K562 (cell line): ENCODE measurements at regions of chr13 and their contacts with region 1.

Region 1: GRCh38 chr13:41905600-41906254 is 55.2 kb downstream of the VWA8 start:
- DNase-seq: peak in 3 of 4 experiments; percentile 19 to 32 (median 31)
- ATAC-seq: peak; percentile 90
- H3K4me3 ChIP-seq: no peak overlapping the region
- H3K27ac ChIP-seq: no peak overlapping the region
- H3K4me1 ChIP-seq: no peaks in the 10 kb centered on the region
- H3K27me3 ChIP-seq: no peaks in the 10 kb centered on the region
- CTCF ChIP-seq: peak; percentile 40 to 58 (median 42); a peak in 4 of 6 replicates
- EP300 ChIP-seq: no peak
- POLR2A ChIP-seq: no peak
- RAD21 ChIP-seq: peak; percentile 45 to 74

Region 2: GRCh38 chr13:42215578-42216421 is 310.1 kb after region 1 on chr13:
- CTCF ChIA-PET with region 1: no interaction called
- POLR2A ChIA-PET with region 1: no interaction called
- in situ Hi-C with region 1: no loop called
- intact Hi-C with region 1: loop called (anchors 10 kb)
- DNase-seq: peak; percentile 4 to 45 (median 10)
- ATAC-seq: peak; percentile 92
- H3K4me3 ChIP-seq: no peak overlapping the region
- H3K27ac ChIP-seq: no peak overlapping the region
- H3K4me1 ChIP-seq: no peaks in the 10 kb centered on the region; a peak in 2 of 5 replicates
- H3K27me3 ChIP-seq: no peaks in the 10 kb centered on the region
- CTCF ChIP-seq: peak; percentile 52 to 67 (median 66); a peak in 5 of 6 replicates
- EP300 ChIP-seq: no peak
- POLR2A ChIP-seq: no peak
- RAD21 ChIP-seq: peak; percentile 64 to 76